ENCODE measurements at regions of chr14 and their contacts with region 1.

Region 1: GRCh38 chr14:100362311-100362927 is 39.3 kb downstream of the SLC25A47 start:
- DNase-seq: no peak
- H3K4me3 ChIP-seq: no peak overlapping the region
- CTCF ChIP-seq: no peak

Region 2: GRCh38 chr14:99971087-99971940 is 391.1 kb before region 1 on chr14:
- CTCF ChIA-PET with region 1: no interaction called
- POLR2A ChIA-PET with region 1: no interaction called
- DNase-seq: no peak
- H3K4me3 ChIP-seq: peak overlapping the region; percentile 79
- CTCF ChIP-seq: no peak

Region 3: DNA sequence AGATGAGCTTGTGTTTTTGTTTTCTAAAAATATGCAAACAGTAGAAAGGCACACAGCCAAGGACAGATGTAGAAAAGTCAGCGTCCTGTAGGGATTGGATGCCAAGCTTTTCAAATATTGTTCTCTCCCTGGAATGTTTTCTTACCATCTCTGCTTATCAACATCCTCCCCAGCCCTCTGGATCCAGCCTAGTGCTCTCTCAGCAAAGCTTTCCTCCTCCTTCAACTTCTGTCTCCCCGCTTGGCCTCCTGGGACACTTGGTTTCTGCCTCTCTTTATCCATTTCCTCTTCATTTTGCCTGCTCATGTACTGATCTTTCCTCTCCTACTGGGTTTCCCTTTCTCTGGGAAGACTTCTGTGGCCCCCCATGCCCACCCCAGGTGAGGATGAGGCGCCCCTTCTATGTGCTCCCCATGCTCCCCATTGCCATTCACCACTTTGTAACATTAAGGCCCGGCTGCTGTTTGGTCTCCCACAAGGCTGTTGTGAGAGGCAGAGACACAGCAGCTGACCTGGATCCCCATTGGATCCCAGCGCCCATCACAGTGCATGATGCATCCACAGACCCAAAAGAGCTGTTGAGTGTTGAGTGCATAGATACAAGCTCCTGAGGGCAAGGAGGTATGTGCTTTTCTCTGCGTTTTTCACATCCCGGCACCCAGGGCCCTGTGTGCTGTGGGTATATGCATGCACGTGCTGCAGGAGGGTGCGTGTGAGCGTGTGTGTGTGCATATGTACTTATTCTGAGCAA is 259.0 kb before region 1 on chr14:
- CTCF ChIA-PET with region 1: no interaction called
- POLR2A ChIA-PET with region 1: no interaction called
- DNase-seq: no peak
- H3K4me3 ChIP-seq: no peak overlapping the region
- CTCF ChIP-seq: no peak

Region 4: DNA sequence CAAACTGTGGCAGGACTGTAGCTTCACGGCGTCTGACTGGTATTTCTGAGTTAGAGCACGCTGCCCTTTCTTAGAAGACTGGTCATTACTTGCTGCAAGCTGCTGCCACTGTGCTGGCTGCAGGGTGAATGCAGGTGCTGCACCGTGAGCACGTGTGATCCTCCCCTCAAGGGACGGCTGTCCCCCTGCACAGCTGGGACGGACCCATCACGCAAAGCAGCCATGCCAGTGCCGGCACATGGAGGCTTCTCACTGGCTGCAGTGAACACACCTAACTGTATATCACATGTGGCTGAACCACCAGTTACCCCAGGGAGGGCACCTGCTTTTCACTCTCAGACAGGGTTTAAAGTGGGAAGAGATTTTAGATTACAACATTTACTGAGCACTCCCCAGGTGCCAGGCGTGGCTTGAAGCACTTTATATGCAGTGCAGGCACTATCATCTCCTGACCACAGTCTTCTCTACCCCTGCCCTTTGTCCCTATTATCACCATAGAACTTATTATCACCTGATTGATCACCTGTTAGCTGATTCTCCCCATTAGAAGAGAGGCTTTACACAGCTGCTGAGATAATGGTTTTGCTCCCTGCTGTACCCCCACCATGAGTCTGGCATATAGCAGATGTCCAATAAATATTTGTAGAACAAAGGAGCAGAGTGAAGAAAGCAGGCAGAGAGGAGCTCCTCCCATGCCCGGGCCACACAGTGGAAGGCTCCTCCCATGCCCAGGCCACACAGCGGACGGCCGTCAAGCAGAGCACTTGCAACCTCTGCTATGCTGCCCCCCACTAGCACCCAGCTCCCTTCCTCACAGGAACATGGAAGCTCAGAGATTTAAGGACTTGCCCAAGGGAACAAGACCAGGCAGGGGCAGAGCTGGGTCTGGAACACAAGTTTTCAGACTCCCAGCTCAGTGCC is 13.4 kb before region 1 on chr14:
- CTCF ChIA-PET with region 1: interaction called, 13 read pairs
- POLR2A ChIA-PET with region 1: no interaction called
- DNase-seq: no peak
- H3K4me3 ChIP-seq: no peak overlapping the region
- CTCF ChIP-seq: no peak

Region 5: DNA sequence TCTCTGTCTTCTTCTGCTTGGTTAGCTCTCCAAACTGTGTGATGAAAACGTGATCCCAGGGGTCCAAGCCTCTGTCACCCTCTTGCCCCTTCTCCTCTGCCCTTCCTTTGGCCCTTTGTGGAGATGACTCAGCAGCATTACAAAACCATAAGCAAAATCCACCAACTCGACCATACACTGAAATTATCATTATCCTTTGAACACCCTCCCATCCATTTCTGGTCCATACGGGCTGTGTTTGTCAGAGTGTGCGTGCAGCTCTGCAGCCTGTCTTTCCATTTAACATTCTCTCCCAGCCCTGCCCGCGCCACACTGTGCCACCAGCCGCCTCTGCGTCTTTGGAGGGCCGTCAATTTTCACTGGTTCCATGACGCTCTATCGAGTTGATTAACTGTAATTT is 29.9 kb after region 1 on chr14:
- CTCF ChIA-PET with region 1: no interaction called
- POLR2A ChIA-PET with region 1: no interaction called
- DNase-seq: no peak
- H3K4me3 ChIP-seq: no peak overlapping the region; the same call in 1 of the 2 replicates
- CTCF ChIP-seq: no peak

Measured in AG04449 (cell line).